Left ventricle myocardium superior (tissue), 1 donor: ENCODE measurements at regions of chr5 and their contacts with region 1.

Region 1: GRCh38 chr5:127288676-127289075 is 1.9 kb upstream of the MEGF10 start:
- DNase-seq: no peak
- ATAC-seq: no peak

Region 2: GRCh38 chr5:127492854-127493738 is 204.4 kb after region 1 on chr5:
- intact Hi-C with region 1: loop called (anchors 5 kb)
- DNase-seq: no peak
- ATAC-seq: no peak

Region 3: GRCh38 chr5:128038643-128039042 is 750.0 kb after region 1 on chr5:
- intact Hi-C with region 1: no loop called
- DNase-seq: no peak
- ATAC-seq: peak; percentile 43